Activated naive CD4-positive, alpha-beta T cell treated with anti-CD3 and anti-CD28 coated beads for 36 hours (primary cell): ENCODE measurements at regions of chr3 and their contacts with region 1.

Region 1: GRCh38 chr3:5136211-5136918 is 14.3 kb downstream of the ARL8B start:
- DNase-seq: peak; percentile 51
- H3K4me3 Mint-ChIP-seq: no peak overlapping the region
- H3K27ac Mint-ChIP-seq: peak overlapping the region; percentile 66
- H3K4me1 Mint-ChIP-seq: peaks cover 68% of the 10 kb centered on the region
- H3K27me3 Mint-ChIP-seq: no peaks in the 10 kb centered on the region

Region 2: GRCh38 chr3:5160928-5161858 is 24.8 kb after region 1 on chr3:
- CTCF ChIA-PET with region 1: interaction called, 3 read pairs
- intact Hi-C with region 1: loop called (anchors 1 kb)
- DNase-seq: peak; percentile 26
- H3K4me3 Mint-ChIP-seq: no peak overlapping the region
- H3K27ac Mint-ChIP-seq: peak overlapping the region; percentile 54
- H3K4me1 Mint-ChIP-seq: peaks cover 72% of the 10 kb centered on the region
- H3K27me3 Mint-ChIP-seq: no peaks in the 10 kb centered on the region

Region 3: GRCh38 chr3:5194341-5195159 is 58.2 kb after region 1 on chr3:
- CTCF ChIA-PET with region 1: interaction called, 8 read pairs
- intact Hi-C with region 1: loop called (anchors 1 kb)
- DNase-seq: peak; percentile 66
- H3K4me3 Mint-ChIP-seq: peak overlapping the region; percentile 25
- H3K27ac Mint-ChIP-seq: peak overlapping the region; percentile 98
- H3K4me1 Mint-ChIP-seq: peaks cover 84% of the 10 kb centered on the region
- H3K27me3 Mint-ChIP-seq: no peaks in the 10 kb centered on the region

Region 4: GRCh38 chr3:5298453-5298852 is 162.1 kb after region 1 on chr3:
- CTCF ChIA-PET with region 1: no interaction called
- intact Hi-C with region 1: loop called (anchors 1 kb)
- DNase-seq: no peak
- H3K4me3 Mint-ChIP-seq: no peak overlapping the region
- H3K27ac Mint-ChIP-seq: no peak overlapping the region
- H3K4me1 Mint-ChIP-seq: peaks cover 6% of the 10 kb centered on the region
- H3K27me3 Mint-ChIP-seq: no peaks in the 10 kb centered on the region

Region 5: DNA sequence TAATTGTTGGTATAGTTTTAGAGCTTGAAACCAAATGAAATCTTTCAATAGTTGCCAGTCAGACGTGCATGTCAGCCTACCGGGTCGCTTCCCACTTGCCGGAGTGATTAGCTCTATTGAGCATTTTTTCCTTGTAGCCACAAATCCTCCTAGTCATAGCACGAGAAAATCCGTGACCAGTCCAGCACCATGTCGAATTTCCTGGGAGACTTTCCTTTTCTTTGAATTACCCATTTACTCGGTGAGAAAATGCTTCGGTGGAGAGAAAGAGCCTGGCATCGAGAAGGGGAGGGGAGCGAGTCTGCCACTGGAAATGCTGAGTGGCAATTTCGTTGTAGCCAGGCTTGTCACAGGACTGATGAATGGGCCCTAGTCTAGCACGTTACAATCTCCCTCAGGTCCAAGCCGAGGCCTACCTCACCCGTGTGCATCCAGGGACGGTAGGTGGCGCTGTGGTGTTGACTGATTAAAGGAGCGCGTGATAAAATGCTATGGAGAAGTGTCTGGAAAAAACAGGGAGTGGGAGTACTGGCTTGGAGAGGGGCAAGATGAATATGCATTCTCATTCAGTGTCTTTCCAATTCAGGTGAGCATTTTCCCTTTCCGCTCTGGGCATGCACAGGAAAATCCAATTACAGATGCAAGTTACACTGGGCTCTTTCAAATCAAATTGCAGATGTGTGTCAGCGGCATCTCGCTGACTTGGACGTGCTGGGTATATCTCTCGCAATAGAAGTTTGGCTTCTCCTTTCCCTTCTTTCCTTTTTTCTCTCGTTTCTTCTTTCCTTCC is 289.9 kb after region 1 on chr3:
- CTCF ChIA-PET with region 1: no interaction called
- intact Hi-C with region 1: loop called (anchors 5 kb)
- DNase-seq: peak; percentile 84
- H3K4me3 Mint-ChIP-seq: no peak overlapping the region
- H3K27ac Mint-ChIP-seq: no peak overlapping the region
- H3K4me1 Mint-ChIP-seq: peaks cover 14% of the 10 kb centered on the region
- H3K27me3 Mint-ChIP-seq: peaks cover 7% of the 10 kb centered on the region

Region 6: GRCh38 chr3:5510300-5510699 is 373.9 kb after region 1 on chr3:
- CTCF ChIA-PET with region 1: no interaction called
- intact Hi-C with region 1: no loop called
- DNase-seq: no peak
- H3K4me3 Mint-ChIP-seq: no peak overlapping the region
- H3K27ac Mint-ChIP-seq: no peak overlapping the region
- H3K4me1 Mint-ChIP-seq: no peaks in the 10 kb centered on the region
- H3K27me3 Mint-ChIP-seq: peaks cover 2% of the 10 kb centered on the region